Gastrocnemius medialis (tissue), 4 donors: ENCODE measurements at regions of chr5 and their contacts with region 1.

Region 1: GRCh38 chr5:34522599-34523386 is 133.3 kb upstream of the RAI14 start:
- DNase-seq: peak in 1 of 2 donors; percentile 24
- ATAC-seq: peak; percentile 64 to 70
- H3K4me3 ChIP-seq: no peak overlapping the region
- H3K27ac ChIP-seq: no peak overlapping the region
- H3K4me1 ChIP-seq: peaks cover 0 to 5% of the 10 kb centered on the region in 2 donors
- H3K27me3 ChIP-seq: no peaks in the 10 kb centered on the region
- CTCF ChIP-seq: peak; percentile 39 to 64 (median 57)
- POLR2A ChIP-seq: no peak

Region 2: GRCh38 chr5:34486160-34486848 is 36.5 kb before region 1 on chr5:
- in situ Hi-C with region 1: no loop called
- intact Hi-C with region 1: loop called (anchors 2 kb)
- DNase-seq: peak; percentile 15 to 50
- ATAC-seq: peak; percentile 60 to 72
- H3K4me3 ChIP-seq: no peak overlapping the region
- H3K27ac ChIP-seq: no peak overlapping the region
- H3K4me1 ChIP-seq: peaks cover 0 to 3% of the 10 kb centered on the region in 2 donors
- H3K27me3 ChIP-seq: no peaks in the 10 kb centered on the region
- CTCF ChIP-seq: peak; percentile 56 to 76 (median 69)
- POLR2A ChIP-seq: no peak

Region 3: DNA sequence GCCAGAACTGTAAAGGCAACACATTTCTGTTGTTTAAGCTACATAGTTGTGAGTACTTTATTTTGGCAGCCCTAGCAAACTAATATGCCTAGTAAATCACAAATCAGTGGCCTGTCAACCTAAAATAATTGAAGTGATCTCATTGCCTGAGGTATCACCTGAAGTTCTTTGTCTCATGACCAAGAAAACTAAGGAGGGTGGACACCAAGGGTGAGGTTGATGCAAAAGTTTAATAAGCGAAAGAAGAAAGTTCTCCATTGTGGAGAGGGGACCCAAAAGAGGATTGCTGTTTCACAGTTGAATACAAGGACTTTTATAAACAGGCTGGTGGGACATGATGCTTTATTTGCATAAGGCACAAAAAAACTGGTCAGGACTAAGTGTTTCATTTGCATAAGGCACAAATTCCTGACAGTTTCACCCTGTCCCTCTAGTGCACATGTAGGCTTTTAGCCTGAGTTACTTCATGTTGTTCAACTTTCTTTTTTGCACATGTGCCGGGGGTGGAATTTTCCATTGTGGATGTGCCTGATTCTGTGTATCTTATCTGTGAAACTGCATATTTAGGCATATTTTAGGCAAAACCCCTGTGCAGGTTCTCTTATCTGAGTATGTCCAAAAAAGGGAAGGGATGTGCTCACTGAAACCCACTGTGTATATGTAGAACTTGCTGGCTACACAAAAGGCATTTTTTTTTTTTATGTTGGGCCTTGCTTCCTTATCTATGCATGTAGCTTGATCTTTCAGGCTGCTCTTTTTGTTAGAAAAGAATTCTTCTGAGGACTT is 24.7 kb after region 1 on chr5:
- in situ Hi-C with region 1: no loop called
- intact Hi-C with region 1: no loop called
- DNase-seq: no peak
- ATAC-seq: no peak
- H3K4me3 ChIP-seq: no peak overlapping the region
- H3K27ac ChIP-seq: no peak overlapping the region
- H3K4me1 ChIP-seq: no peaks in the 10 kb centered on the region
- H3K27me3 ChIP-seq: no peaks in the 10 kb centered on the region
- CTCF ChIP-seq: no peak
- POLR2A ChIP-seq: no peak

Region 4: DNA sequence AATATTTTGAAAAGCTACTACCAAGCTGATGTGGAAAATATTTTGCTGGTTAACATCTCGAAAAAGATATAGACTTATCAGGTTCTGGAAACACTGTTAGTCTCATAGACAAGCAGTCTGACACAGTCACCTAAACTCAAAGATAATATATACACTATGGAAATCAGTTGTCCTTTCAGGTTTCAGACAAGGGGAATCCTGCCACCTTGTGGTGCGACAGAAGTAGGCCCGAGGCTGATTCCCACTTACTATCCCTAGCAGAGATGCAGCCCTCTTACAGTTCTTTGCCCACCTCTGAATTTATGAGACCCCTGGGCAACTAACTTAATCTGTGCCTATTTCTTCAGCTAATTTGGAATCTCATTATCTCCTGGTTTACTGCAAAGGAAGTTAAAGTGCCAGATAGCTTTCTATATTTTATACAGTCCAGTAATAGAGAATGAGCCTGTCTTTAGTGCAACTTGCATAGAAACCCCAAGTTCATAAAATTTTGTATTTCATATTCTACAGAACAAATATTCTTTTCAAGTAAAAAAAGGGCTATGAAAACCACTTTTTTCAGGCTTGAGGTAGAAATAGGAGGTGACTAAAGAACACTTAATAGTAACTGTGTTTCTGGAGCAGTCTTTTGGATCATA is 375.6 kb after region 1 on chr5:
- in situ Hi-C with region 1: loop called in 2 of 4 experiments (anchors 10 kb)
- intact Hi-C with region 1: loop called (anchors 2 kb)
- DNase-seq: peak; percentile 11 to 19
- ATAC-seq: peak in 1 of 2 donors; percentile 44
- H3K4me3 ChIP-seq: no peak overlapping the region
- H3K27ac ChIP-seq: no peak overlapping the region
- H3K4me1 ChIP-seq: no peaks in the 10 kb centered on the region
- H3K27me3 ChIP-seq: no peaks in the 10 kb centered on the region
- CTCF ChIP-seq: peak; percentile 48 to 77 (median 58)
- POLR2A ChIP-seq: no peak

Region 5: GRCh38 chr5:34905564-34905963 is 382.8 kb after region 1 on chr5:
- in situ Hi-C with region 1: loop called in 1 of 4 experiments (anchors 10 kb)
- intact Hi-C with region 1: no loop called
- DNase-seq: no peak
- ATAC-seq: no peak
- H3K4me3 ChIP-seq: no peak overlapping the region
- H3K27ac ChIP-seq: no peak overlapping the region
- H3K4me1 ChIP-seq: no peaks in the 10 kb centered on the region
- H3K27me3 ChIP-seq: no peaks in the 10 kb centered on the region
- CTCF ChIP-seq: peak in 1 of 5 experiments; percentile 15
- POLR2A ChIP-seq: no peak